ENCODE measurements at regions of chr15 and their contacts with region 1.

Region 1: GRCh38 chr15:89874926-89875564 is 18.7 kb downstream of the AP3S2 start:
- DNase-seq: peak; percentile 88
- ATAC-seq: peak; percentile 100
- H3K4me3 Mint-ChIP-seq: no peak overlapping the region
- H3K27ac Mint-ChIP-seq: no peak overlapping the region
- H3K4me1 Mint-ChIP-seq: peaks cover 3% of the 10 kb centered on the region
- H3K27me3 Mint-ChIP-seq: no peaks in the 10 kb centered on the region

Region 2: GRCh38 chr15:89750560-89751542 is 124.2 kb before region 1 on chr15 and contains the start of gene MESP1:
- CTCF ChIA-PET with region 1: interaction called, 13 read pairs
- DNase-seq: peak; percentile 92
- ATAC-seq: peak; percentile 99
- H3K4me3 Mint-ChIP-seq: peak within 1 kb of the TSS; percentile 64
- H3K27ac Mint-ChIP-seq: no peak within 1 kb of the TSS
- H3K4me1 Mint-ChIP-seq: peaks cover 2% of the 10 kb centered on the region
- H3K27me3 Mint-ChIP-seq: peaks cover 17% of the 10 kb centered on the region
- total RNA-seq, gene MESP1: 3.1 to 5.1 TPM

Region 3: GRCh38 chr15:89772932-89773583 is 102.0 kb before region 1 on chr15:
- CTCF ChIA-PET with region 1: interaction called, 11 read pairs
- DNase-seq: no peak
- ATAC-seq: no peak
- H3K4me3 Mint-ChIP-seq: no peak overlapping the region
- H3K27ac Mint-ChIP-seq: no peak overlapping the region
- H3K4me1 Mint-ChIP-seq: no peaks in the 10 kb centered on the region
- H3K27me3 Mint-ChIP-seq: peaks cover 14% of the 10 kb centered on the region

Region 4: DNA sequence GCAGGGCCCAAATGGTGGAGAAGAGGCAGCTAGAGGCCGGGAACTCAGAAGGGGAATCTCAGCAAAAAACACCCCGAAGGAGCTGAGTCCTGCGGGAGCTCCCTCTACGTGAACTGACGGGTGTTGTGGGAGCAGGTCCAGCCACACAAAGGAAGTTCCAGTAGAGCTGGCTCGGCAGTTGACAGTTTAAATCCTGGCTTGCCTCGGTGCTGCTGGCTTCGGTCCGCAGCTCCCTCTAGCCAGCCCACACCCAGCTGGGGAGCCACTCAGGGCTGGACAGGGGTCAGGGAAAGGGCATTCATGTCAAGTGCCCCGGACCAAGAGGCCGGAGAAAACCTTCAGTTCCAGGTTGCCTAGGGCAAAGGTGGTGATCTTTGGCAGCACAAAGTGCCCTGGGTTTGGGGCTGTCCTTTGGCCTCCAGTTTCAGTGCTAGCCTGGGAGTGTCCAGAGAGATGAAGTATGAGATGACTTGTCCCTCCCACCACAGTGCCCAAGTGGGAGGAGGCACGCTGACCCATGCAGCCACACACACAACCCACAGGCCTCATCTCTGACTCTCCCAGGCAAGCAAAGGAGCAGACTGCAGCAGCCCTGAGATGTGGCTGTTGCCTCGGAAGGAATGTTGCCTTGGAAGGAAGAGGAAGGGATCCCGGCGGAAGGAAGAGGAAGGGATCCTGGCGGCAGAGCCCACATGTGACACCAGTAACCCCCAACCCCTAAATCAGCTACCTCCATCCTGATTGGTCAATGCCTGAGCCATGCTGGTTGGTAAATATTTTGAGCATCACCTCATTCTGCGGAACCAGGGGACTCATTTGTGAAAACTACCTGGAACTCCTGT is 46.6 kb before region 1 on chr15:
- CTCF ChIA-PET with region 1: no interaction called
- DNase-seq: no peak
- ATAC-seq: no peak
- H3K4me3 Mint-ChIP-seq: no peak overlapping the region
- H3K27ac Mint-ChIP-seq: no peak overlapping the region
- H3K4me1 Mint-ChIP-seq: no peaks in the 10 kb centered on the region
- H3K27me3 Mint-ChIP-seq: no peaks in the 10 kb centered on the region

Region 5: DNA sequence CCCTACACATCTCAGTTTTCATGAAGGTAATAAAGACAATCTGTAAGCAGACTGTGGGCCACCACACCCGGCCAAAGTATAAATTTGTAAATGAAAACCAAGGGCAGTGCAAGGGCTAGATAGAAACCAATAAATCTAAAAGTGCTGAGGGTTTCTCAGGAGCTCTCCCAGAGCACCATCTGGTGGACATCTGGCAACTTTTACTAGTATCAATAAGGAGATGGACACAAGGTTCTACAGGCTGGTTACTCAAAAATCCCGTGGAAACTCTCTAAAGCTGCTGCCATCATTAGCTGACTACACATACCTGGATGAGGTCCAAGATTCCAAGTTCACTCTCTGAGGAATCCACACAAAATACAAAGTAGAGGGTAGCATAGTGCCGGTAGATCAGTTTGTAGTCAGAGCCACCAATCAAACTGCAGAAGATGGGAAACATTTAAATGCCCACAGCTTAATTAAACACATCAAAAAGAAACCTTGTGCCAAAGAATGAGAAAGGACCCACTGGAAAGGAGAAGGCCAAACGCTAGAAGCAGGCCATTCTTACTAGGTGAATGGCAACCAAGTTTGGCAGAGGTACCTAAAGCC is 13.3 kb after region 1 on chr15:
- CTCF ChIA-PET with region 1: interaction called, 61 read pairs
- DNase-seq: no peak
- ATAC-seq: no peak
- H3K4me3 Mint-ChIP-seq: no peak overlapping the region
- H3K27ac Mint-ChIP-seq: no peak overlapping the region
- H3K4me1 Mint-ChIP-seq: peaks cover 25% of the 10 kb centered on the region
- H3K27me3 Mint-ChIP-seq: no peaks in the 10 kb centered on the region

Region 6: DNA sequence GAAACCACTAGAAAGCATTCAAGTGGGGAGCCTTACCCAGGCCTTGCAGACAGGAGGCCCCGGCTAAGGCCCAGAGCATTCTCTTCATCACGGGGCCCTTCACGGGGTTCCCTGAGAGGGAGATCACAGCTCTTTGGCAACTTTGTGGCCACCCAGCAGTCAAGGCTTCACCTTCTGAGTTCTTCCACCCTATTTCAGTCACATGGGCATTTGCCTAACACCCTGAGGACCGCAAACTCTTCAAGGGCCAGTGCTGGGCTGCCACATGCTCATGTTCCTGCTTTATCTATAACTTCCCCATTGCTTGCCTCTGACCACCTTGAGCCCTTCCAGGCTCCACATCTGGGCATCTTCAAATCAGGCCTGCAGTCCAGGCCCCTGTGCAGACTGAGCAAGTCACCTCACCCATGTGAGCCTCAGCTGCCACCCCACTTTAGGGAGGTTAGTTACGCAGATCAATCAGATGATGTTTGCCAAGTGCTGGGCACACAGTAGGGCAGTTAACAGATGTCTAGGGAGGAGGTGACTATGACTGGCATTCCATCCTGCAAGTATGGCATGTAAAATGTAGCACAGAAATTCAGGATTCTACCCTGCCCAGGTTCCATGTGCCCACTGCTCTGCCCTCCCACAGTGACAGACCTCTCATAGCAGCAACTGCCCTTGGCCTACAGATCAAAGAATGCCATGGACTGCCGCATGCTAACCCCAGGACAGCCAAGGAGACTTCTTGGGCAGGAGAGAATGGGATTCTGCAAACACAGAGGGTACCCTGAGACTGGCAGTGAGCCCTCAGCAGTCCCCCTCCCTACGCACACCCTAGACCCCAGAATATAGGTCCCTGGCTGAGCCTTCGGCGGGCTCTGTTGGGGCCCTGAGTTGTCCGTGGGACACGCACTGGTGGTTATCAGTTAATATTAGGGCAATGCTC is 88.5 kb after region 1 on chr15:
- CTCF ChIA-PET with region 1: no interaction called
- DNase-seq: no peak
- ATAC-seq: no peak
- H3K4me3 Mint-ChIP-seq: no peak overlapping the region
- H3K27ac Mint-ChIP-seq: no peak overlapping the region
- H3K4me1 Mint-ChIP-seq: peaks cover 9% of the 10 kb centered on the region
- H3K27me3 Mint-ChIP-seq: peaks cover 5% of the 10 kb centered on the region